MCF 10A (cell line): ENCODE measurements at regions of chr6 and their contacts with region 1.

Region 1: GRCh38 chr6:143427109-143427817 is 23.2 kb downstream of the ADAT2 start:
- DNase-seq: peak; percentile 78
- H3K4me3 Mint-ChIP-seq: no peak overlapping the region
- H3K27ac Mint-ChIP-seq: peak overlapping the region; percentile 84
- H3K4me1 Mint-ChIP-seq: peaks cover 11% of the 10 kb centered on the region
- H3K27me3 Mint-ChIP-seq: no peaks in the 10 kb centered on the region
- CTCF ChIP-seq: peak; percentile 98

Region 2: GRCh38 chr6:142566628-142567396 is 860.5 kb before region 1 on chr6:
- CTCF ChIA-PET with region 1: no interaction called
- POLR2A ChIA-PET with region 1: no interaction called
- intact Hi-C with region 1: loop called (anchors 5 kb)
- DNase-seq: peak; percentile 73
- H3K4me3 Mint-ChIP-seq: no peak overlapping the region
- H3K27ac Mint-ChIP-seq: no peak overlapping the region
- H3K4me1 Mint-ChIP-seq: peaks cover 27% of the 10 kb centered on the region
- H3K27me3 Mint-ChIP-seq: no peaks in the 10 kb centered on the region
- CTCF ChIP-seq: peak; percentile 76

Region 3: GRCh38 chr6:142746524-142746923 is 680.7 kb before region 1 on chr6:
- CTCF ChIA-PET with region 1: no interaction called
- POLR2A ChIA-PET with region 1: no interaction called
- intact Hi-C with region 1: loop called (anchors 1 kb)
- DNase-seq: peak; percentile 40
- H3K4me3 Mint-ChIP-seq: no peak overlapping the region
- H3K27ac Mint-ChIP-seq: no peak overlapping the region
- H3K4me1 Mint-ChIP-seq: peaks cover 6% of the 10 kb centered on the region
- H3K27me3 Mint-ChIP-seq: no peaks in the 10 kb centered on the region
- CTCF ChIP-seq: peak; percentile 19

Region 4: DNA sequence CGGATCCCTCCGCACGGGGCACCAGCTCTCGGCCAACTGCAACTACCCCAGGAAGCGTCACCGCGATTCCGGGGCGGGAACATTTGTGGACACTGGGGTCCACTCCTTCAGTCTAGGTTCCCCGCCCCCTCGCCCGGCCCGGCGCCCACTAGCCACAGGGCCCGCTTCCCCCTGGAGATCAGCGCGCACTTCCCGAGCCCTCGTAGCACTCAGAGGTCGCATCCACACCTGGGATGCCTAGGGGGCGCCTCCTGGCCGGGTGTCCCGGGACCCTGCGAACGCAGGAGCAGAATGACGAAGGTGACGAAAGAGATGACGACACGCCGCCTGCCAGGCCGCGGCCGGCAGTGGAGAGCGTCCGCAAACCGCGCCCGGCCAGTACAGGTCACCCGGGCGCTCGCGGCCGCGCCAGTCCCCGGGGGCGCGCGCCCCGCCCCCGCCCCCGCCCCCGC is 366.9 kb before region 1 on chr6:
- CTCF ChIA-PET with region 1: no interaction called
- POLR2A ChIA-PET with region 1: interaction called, 6 read pairs
- intact Hi-C with region 1: loop called (anchors 10 kb)
- DNase-seq: peak; percentile 90
- H3K4me3 Mint-ChIP-seq: peak overlapping the region; percentile 94
- H3K27ac Mint-ChIP-seq: peak overlapping the region; percentile 97
- H3K4me1 Mint-ChIP-seq: peaks cover 37% of the 10 kb centered on the region
- H3K27me3 Mint-ChIP-seq: no peaks in the 10 kb centered on the region
- CTCF ChIP-seq: no peak

Region 5: DNA sequence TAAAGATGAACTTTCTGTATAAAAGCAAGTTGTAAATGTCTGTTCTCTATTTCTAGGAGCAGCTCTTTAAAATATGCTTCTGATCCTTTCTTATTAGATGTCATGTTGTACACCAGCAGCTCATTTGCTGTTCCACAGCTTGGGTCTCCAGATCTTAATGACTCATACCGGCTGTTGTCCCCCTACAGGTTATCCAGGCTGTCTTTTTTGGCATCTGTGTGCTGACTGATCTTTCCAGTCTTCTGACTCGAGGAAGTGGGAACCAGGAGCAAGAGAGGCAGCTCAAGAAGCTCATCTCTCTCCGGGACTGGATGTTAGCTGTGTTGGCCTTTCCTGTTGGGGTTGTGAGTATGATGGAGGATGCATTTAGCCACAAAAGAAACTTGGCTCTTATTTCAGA is 290.6 kb before region 1 on chr6:
- CTCF ChIA-PET with region 1: no interaction called
- POLR2A ChIA-PET with region 1: no interaction called
- intact Hi-C with region 1: no loop called
- DNase-seq: no peak
- H3K4me3 Mint-ChIP-seq: no peak overlapping the region
- H3K27ac Mint-ChIP-seq: no peak overlapping the region
- H3K4me1 Mint-ChIP-seq: peaks cover 17% of the 10 kb centered on the region
- H3K27me3 Mint-ChIP-seq: no peaks in the 10 kb centered on the region
- CTCF ChIP-seq: no peak

Region 6: DNA sequence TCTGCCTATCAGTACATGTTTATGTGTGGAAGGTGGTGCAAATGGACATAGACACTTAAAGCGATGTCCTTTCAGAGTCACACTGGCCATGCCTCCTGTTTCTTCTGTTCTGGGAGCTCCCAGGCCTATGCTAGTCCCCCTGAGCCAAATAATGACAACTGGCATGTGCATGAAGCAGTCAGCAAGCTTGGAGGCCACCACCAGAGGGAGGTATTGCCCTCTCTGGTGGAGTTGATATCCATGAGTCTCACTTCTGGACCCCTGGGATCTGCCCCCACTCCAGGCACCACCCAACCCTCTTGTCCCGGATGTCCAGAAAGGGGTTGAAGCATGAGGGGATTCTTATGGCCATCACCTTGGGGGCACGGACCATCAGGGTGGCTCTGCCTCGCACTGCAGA is 194.4 kb before region 1 on chr6:
- CTCF ChIA-PET with region 1: interaction called, 18 read pairs
- POLR2A ChIA-PET with region 1: interaction called, 3 read pairs
- intact Hi-C with region 1: loop called (anchors 1 kb)
- DNase-seq: peak; percentile 70
- H3K4me3 Mint-ChIP-seq: no peak overlapping the region
- H3K27ac Mint-ChIP-seq: peak overlapping the region; percentile 33
- H3K4me1 Mint-ChIP-seq: peaks cover 7% of the 10 kb centered on the region
- H3K27me3 Mint-ChIP-seq: no peaks in the 10 kb centered on the region
- CTCF ChIP-seq: peak; percentile 55

Region 7: DNA sequence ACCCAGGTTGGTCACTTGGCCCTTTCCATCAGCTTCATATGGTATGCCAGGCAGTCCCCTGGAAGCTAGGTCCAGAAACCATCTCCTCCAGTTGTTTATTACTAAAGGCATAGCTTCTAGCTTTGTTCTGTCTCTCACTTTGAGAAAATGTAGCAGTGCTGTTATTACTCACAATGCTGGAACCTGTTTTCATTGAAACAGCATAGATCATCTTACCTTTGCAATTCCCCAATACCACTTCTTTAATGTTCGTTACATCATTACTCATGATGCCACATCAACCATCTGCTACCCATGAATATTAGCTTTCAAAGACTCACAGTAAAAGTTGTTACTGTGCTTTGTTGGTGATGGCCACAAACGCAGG is 65.1 kb before region 1 on chr6:
- CTCF ChIA-PET with region 1: no interaction called
- POLR2A ChIA-PET with region 1: no interaction called
- intact Hi-C with region 1: no loop called
- DNase-seq: no peak
- H3K4me3 Mint-ChIP-seq: no peak overlapping the region
- H3K27ac Mint-ChIP-seq: no peak overlapping the region
- H3K4me1 Mint-ChIP-seq: no peaks in the 10 kb centered on the region
- H3K27me3 Mint-ChIP-seq: no peaks in the 10 kb centered on the region
- CTCF ChIP-seq: no peak

Region 8: DNA sequence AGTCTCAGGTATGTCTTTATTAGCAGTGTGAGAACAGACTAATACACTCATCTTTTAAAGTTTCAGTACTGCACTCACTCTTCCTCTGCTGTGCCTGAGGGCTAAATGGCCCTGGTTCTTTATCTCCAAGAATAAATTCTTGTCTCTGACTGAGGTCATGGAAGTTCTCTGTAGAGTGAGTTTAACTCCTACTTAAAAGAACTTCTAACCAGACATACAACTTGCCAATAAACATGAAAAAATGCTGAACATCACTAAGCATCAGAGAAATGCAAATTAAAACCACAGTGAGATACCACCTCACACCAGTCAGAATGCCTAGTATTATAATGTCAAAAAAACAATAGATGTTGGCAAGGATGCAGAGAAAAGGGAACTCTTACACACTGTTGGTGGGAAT is 50.4 kb before region 1 on chr6:
- CTCF ChIA-PET with region 1: no interaction called
- POLR2A ChIA-PET with region 1: no interaction called
- intact Hi-C with region 1: no loop called
- DNase-seq: no peak
- H3K4me3 Mint-ChIP-seq: no peak overlapping the region
- H3K27ac Mint-ChIP-seq: no peak overlapping the region
- H3K4me1 Mint-ChIP-seq: no peaks in the 10 kb centered on the region
- H3K27me3 Mint-ChIP-seq: no peaks in the 10 kb centered on the region
- CTCF ChIP-seq: no peak

Region 9: GRCh38 chr6:143410859-143411270 is 16.4 kb before region 1 on chr6:
- CTCF ChIA-PET with region 1: interaction called, 10 read pairs
- POLR2A ChIA-PET with region 1: interaction called, 10 read pairs
- intact Hi-C with region 1: no loop called
- DNase-seq: peak; percentile 65
- H3K4me3 Mint-ChIP-seq: no peak overlapping the region
- H3K27ac Mint-ChIP-seq: peak overlapping the region; percentile 77
- H3K4me1 Mint-ChIP-seq: peaks cover 54% of the 10 kb centered on the region
- H3K27me3 Mint-ChIP-seq: no peaks in the 10 kb centered on the region
- CTCF ChIP-seq: no peak